ENCODE measurements at regions of chr15 and their contacts with region 1.

Region 1: DNA sequence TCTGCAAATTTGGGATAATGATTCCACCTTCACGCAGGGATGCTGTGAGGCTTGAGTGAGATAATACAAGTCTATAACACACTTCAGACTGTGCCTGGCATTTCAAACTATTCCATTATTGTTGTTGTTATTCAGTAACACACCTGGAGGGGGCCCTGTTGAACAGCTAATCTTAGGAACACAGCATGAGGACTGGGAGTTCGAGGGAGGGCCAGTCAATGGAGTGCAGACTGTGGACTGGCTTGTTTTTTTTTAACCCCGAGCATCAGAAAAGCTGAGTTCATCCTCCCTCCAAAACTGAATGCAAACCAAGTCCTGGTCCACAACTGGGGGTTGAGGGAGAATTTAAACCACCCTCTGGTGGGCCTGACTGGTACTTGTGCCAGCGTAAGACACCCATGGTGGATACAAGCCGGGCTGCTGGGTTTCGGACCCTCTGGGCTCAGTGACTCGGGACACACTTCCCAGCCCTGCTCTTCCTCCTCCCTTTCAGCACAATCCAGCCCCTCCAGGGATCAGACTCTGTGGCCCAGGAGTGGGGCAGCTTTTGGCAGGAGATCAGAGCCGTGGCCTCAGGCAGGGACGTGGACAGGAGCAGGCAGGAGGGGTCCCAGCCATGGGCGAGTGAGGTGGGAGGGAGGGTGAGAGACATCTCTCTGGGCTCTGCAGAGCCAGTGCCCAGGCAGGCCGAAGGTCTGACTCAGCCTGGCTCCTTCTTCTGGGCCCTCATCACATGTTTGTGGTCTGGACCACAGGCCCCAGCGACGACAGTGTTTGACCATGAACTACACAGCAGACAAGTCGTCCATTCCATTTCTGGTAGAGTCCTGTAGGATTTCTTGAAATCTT is 36.3 kb upstream of the MEX3B start:
- DNase-seq: peak in 1 of 2 experiments; percentile 67
- H3K4me3 ChIP-seq: no peak overlapping the region
- H3K27ac ChIP-seq: no peak overlapping the region
- H3K4me1 ChIP-seq: peaks cover 0 to 2% (median 0%) of the 10 kb centered on the region in 4 experiments; a peak in 1 of 7 replicates
- H3K27me3 ChIP-seq: no peaks in the 10 kb centered on the region
- CTCF ChIP-seq: peak in 2 of 3 experiments; percentile 66 to 74; a peak in 3 of 4 replicates
- EP300 ChIP-seq: no peak
- POLR2A ChIP-seq: no peak
- RAD21 ChIP-seq: peak; percentile 80 to 87

Region 2: GRCh38 chr15:81924729-81925128 is 157.4 kb before region 1 on chr15:
- CTCF ChIA-PET with region 1: no interaction called
- POLR2A ChIA-PET with region 1: no interaction called
- DNase-seq: no peak
- H3K4me3 ChIP-seq: no peak overlapping the region
- H3K27ac ChIP-seq: no peak overlapping the region
- H3K4me1 ChIP-seq: no peaks in the 10 kb centered on the region
- H3K27me3 ChIP-seq: no peaks in the 10 kb centered on the region
- CTCF ChIP-seq: no peak
- EP300 ChIP-seq: no peak
- POLR2A ChIP-seq: no peak
- RAD21 ChIP-seq: no peak

Region 3: DNA sequence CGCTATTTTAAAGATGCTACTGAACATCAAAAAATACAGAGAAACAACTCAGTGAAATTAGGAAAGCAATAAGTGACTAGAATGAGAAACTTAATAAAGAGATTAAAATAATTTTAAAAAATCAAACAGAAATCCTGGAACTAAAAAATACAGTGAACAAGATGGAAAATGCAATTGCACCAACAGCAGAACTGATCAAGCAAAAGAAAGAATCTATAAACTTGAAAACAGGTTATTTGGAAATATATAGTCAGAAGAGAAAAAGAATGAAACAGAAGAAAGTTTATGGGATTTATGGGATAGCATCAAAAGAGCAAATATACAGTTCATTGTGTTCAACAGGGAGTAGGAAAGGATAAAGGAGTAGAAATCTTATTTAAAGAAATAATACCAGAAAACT is 89.6 kb before region 1 on chr15:
- CTCF ChIA-PET with region 1: no interaction called
- POLR2A ChIA-PET with region 1: no interaction called
- DNase-seq: no peak
- H3K4me3 ChIP-seq: no peak overlapping the region
- H3K27ac ChIP-seq: no peak overlapping the region
- H3K4me1 ChIP-seq: 0 out of 7 replicates have a peak, but pooled peaks cover 0 to 2% (median 0%) of the 10 kb centered on the region in 4 experiments
- H3K27me3 ChIP-seq: no peaks in the 10 kb centered on the region
- CTCF ChIP-seq: no peak
- EP300 ChIP-seq: no peak
- POLR2A ChIP-seq: no peak
- RAD21 ChIP-seq: no peak

Region 4: DNA sequence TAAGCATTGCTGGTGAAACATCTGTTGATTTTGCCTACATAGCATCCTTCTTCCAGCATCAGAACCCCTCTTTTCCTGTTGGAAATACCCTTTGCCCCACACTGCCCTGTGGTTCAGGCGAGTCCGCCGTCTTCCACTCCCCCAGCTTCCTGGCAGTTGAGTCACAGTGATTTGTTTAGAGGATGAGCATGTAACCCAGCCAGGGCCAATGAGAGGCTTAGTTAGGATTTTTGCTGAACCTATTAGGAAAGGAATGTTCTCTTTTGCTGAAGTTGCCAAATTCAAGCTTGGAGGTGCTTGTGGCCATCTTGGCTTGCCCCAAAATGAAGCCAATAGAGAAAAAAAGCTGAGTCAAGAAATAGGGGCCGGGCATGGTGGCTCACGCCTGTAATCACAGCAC is 17.3 kb before region 1 on chr15:
- CTCF ChIA-PET with region 1: interaction called, 27 read pairs
- POLR2A ChIA-PET with region 1: interaction called, 3 read pairs
- DNase-seq: no peak
- H3K4me3 ChIP-seq: no peak overlapping the region
- H3K27ac ChIP-seq: no peak overlapping the region
- H3K4me1 ChIP-seq: peaks cover 2 to 5% (median 3%) of the 10 kb centered on the region in 4 experiments; a peak in 4 of 7 replicates
- H3K27me3 ChIP-seq: peaks cover 2 to 27% (median 22%) of the 10 kb centered on the region in 4 experiments
- CTCF ChIP-seq: no peak
- EP300 ChIP-seq: no peak
- POLR2A ChIP-seq: no peak
- RAD21 ChIP-seq: no peak

Region 5: GRCh38 chr15:82093774-82094211 is 11.7 kb after region 1 on chr15:
- CTCF ChIA-PET with region 1: interaction called, 11 read pairs
- POLR2A ChIA-PET with region 1: no interaction called
- DNase-seq: no peak
- H3K4me3 ChIP-seq: no peak overlapping the region
- H3K27ac ChIP-seq: no peak overlapping the region
- H3K4me1 ChIP-seq: no peaks in the 10 kb centered on the region; a peak in 1 of 7 replicates
- H3K27me3 ChIP-seq: no peaks in the 10 kb centered on the region; a peak in 1 of 7 replicates
- CTCF ChIP-seq: no peak
- EP300 ChIP-seq: no peak
- POLR2A ChIP-seq: no peak
- RAD21 ChIP-seq: no peak

Region 6: DNA sequence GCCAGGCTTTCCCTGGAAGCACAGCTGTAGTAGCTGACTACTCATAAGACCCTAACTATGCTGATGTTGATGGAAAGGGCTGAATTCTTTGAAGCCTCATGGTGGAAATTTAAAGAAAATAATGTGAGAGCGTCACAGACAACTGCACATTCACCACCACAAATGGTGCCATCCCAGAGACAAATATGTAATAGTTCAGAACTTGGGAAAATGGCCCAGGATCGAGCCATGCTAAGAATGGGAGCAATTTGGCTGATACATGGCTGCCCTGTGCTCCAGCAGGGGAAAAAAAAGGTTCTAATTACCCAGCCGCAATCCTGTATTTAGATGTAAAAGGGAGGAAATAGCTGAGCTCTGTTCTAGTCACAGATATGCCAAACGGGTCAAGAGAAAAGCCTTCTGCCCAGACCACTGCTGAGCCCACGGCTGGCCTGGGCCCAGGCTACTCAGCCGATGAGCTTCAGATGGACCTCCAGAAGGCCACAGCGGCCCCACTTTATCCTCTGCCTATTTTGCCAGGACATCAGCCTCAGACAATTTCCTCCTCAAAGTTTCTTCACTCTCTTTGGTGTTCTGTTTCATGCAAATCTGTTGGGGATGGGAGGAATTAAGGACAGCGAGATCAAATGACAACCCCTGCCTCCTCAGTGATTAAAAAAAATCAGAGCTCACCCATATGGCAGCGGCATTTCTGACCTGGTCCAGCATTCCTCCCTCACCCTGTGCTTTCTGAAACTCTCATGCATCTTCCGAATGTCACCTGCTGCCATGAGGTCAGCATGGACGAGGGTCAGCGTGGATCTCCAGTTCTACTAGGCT is 18.2 kb after region 1 on chr15:
- CTCF ChIA-PET with region 1: interaction called, 27 read pairs
- POLR2A ChIA-PET with region 1: no interaction called
- DNase-seq: no peak
- H3K4me3 ChIP-seq: no peak overlapping the region
- H3K27ac ChIP-seq: no peak overlapping the region
- H3K4me1 ChIP-seq: peaks cover 2 to 12% (median 7%) of the 10 kb centered on the region in 4 experiments
- H3K27me3 ChIP-seq: 0 out of 7 replicates have a peak, but pooled peaks cover 0 to 2% (median 0%) of the 10 kb centered on the region in 4 experiments
- CTCF ChIP-seq: no peak
- EP300 ChIP-seq: no peak
- POLR2A ChIP-seq: no peak
- RAD21 ChIP-seq: no peak

Measured in H1 (cell line).